ENCODE measurements at regions of chr7 and their contacts with region 1.

Region 1: DNA sequence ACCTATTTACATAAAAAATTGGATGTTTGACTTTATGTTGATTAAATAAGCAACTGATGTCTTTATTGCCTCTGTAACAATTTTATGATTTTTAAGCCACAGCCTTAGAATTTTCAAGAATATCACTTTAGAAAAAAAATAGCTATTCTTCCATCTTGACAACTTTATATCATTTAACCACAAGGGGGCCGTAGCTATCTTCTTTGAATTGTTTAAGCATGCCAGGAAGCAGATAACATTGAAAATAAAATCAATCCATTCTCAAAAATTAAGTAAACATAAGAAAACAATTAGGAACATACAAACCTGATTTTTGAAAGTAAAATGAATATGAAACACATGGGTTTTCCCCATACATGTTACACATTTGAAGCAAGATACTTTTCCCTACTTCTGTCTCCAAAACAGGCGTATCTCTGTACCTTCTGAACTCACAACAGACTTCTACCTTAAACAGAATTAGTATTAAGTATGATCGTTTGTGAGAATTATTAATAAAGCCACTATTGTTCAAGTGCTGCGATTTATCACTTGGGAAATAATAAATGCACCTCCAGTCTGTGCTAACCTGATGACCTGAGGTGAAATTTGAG is 209.0 kb downstream of the CACNA2D1 start:
- ATAC-seq: peak in 1 of 8 experiments; percentile 19
- H3K4me3 ChIP-seq: no peak overlapping the region
- H3K27ac ChIP-seq: no peak overlapping the region
- H3K4me1 ChIP-seq: peaks cover 5 to 20% of the 10 kb centered on the region in 2 donors

Region 2: DNA sequence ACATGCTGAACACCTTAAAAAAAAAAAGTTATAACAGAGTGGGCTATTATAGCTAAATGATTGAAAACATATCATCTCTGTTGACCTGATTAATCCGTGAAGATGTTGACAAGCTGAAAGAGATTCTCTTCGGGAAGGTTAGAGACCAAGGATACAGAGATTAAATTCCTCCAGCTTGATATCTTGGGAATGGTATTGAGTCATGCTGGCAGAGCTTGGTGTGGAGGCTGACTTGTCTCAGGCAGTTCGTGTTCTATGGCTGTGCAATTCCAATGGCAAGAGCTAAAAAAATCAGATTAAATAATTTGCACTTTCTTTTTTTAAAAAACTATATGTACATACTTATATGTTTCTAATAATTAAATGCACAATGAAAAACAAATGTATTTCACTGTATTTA is 233.9 kb after region 1 on chr7:
- in situ Hi-C with region 1: loop called in 3 of 9 experiments (anchors 25 kb)
- ATAC-seq: no peak
- H3K4me3 ChIP-seq: no peak overlapping the region
- H3K27ac ChIP-seq: no peak overlapping the region
- H3K4me1 ChIP-seq: no peaks in the 10 kb centered on the region

Region 3: DNA sequence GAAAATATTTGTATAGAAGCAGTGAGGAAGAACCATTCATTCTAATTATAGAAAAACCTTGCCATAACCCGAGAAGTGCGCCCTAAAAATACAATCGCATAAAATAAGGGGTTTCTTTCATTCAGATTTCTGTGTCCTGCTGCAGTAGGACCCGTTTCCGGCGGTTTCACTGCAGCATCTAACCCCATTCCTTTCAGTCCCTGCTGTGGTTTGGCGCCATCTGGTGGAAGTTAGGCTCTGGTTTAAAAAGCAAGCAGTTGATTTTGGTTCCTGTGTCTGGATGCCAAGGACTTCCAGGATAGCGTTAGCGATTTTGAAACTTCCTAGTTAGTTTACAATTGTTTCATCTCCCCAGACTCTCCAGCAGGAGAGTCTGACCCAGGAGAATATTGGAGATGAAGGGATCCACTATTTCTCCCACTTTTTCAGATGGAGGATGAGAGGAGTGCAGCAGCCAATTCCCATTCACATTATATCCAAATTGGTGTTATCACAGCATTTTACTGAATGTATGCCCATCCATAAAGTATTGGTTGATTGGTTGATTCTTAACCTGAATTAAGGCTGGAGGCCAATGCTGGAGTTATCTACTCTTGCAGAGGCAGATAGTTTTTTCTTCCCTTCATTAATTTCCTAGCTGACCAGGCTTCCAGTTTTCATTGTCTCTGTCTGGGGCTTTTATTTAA is 337.8 kb after region 1 on chr7:
- in situ Hi-C with region 1: loop called in 3 of 9 experiments (anchors 25 kb)
- ATAC-seq: peak; percentile 66 to 91 (median 77)
- H3K4me3 ChIP-seq: no peak overlapping the region
- H3K27ac ChIP-seq: no peak overlapping the region
- H3K4me1 ChIP-seq: no peaks in the 10 kb centered on the region